Aorta (tissue), 5 donors: ENCODE measurements at regions of chr12 and their contacts with region 1.

Region 1: GRCh38 chr12:124036674-124037109 is 63.7 kb downstream of the ZNF664 start:
- DNase-seq: no peak
- ATAC-seq: peak; percentile 55
- H3K4me3 ChIP-seq: no peak overlapping the region
- H3K27ac ChIP-seq: no peak overlapping the region
- H3K4me1 ChIP-seq: no peaks in the 10 kb centered on the region
- H3K27me3 ChIP-seq: no peaks in the 10 kb centered on the region

Region 2: DNA sequence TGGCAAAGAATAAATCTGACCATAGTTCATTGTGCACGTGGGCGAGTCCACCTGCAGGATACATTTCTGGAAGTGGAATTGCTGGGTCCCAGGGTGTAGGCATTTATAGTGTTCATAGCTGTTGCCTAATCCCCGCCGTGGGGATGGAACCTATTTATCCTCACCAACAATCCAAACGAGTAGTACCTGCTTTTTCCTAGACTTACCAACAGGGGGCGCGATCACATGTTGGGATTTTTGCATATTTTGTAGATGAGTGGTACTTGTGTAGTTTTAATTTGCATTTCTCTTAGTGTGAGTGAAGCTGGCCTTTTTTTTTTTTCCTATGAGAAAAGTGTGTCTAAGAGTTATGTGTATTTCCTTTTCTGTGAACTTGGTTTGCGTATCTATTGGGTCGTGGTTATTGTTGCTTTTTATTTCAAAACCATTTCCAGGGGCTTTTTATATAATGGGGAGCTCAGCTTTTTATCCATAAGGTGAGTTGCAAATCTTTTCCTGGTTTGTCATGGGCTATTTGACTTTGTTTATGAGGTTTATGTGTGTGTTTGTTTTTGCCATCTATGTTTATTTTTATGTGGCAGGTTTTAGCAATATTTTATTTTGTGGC is 131.3 kb before region 1 on chr12:
- intact Hi-C with region 1: loop called in 1 of 2 experiments (anchors 2 kb)
- DNase-seq: peak; percentile 67 to 68
- ATAC-seq: peak; percentile 62
- H3K4me3 ChIP-seq: no peak overlapping the region
- H3K27ac ChIP-seq: no peak overlapping the region
- H3K4me1 ChIP-seq: no peaks in the 10 kb centered on the region
- H3K27me3 ChIP-seq: no peaks in the 10 kb centered on the region

Region 3: GRCh38 chr12:124321040-124321481 is 284.4 kb after region 1 on chr12:
- intact Hi-C with region 1: loop called (anchors 2 to 5 kb)
- DNase-seq: peak; percentile 80 to 93
- ATAC-seq: peak; percentile 90
- H3K4me3 ChIP-seq: no peak overlapping the region
- H3K27ac ChIP-seq: no peak overlapping the region
- H3K4me1 ChIP-seq: no peaks in the 10 kb centered on the region
- H3K27me3 ChIP-seq: no peaks in the 10 kb centered on the region

Region 4: GRCh38 chr12:124906606-124907261 is 870.0 kb after region 1 on chr12:
- intact Hi-C with region 1: loop called in 1 of 2 experiments (anchors 10 kb)
- DNase-seq: peak; percentile 85 to 87
- ATAC-seq: peak; percentile 76
- H3K4me3 ChIP-seq: no peak overlapping the region
- H3K27ac ChIP-seq: no peak overlapping the region
- H3K4me1 ChIP-seq: peaks cover 0 to 3% of the 10 kb centered on the region in 2 donors
- H3K27me3 ChIP-seq: no peaks in the 10 kb centered on the region